Activated CD8-positive, alpha-beta T cell treated with anti-CD3 and anti-CD28 coated beads, Interleukin-2, amount 10 ng/mL, durations not matched to agents 7 days and 5 days (primary cell): ENCODE measurements at regions of chr1 and their contacts with region 1.

Region 1: GRCh38 chr1:26900001-26900814 is at the start of gene GPATCH3:
- DNase-seq: peak; percentile 94
- ATAC-seq: peak; percentile 94
- H3K4me3 Mint-ChIP-seq: peak within 1 kb of the TSS; percentile 78
- H3K27ac Mint-ChIP-seq: peak within 1 kb of the TSS; percentile 95
- H3K4me1 Mint-ChIP-seq: peaks cover 27% of the 10 kb centered on the region
- H3K27me3 Mint-ChIP-seq: no peaks in the 10 kb centered on the region
- total RNA-seq, gene GPATCH3: 14.9 to 16.4 TPM

Region 2: DNA sequence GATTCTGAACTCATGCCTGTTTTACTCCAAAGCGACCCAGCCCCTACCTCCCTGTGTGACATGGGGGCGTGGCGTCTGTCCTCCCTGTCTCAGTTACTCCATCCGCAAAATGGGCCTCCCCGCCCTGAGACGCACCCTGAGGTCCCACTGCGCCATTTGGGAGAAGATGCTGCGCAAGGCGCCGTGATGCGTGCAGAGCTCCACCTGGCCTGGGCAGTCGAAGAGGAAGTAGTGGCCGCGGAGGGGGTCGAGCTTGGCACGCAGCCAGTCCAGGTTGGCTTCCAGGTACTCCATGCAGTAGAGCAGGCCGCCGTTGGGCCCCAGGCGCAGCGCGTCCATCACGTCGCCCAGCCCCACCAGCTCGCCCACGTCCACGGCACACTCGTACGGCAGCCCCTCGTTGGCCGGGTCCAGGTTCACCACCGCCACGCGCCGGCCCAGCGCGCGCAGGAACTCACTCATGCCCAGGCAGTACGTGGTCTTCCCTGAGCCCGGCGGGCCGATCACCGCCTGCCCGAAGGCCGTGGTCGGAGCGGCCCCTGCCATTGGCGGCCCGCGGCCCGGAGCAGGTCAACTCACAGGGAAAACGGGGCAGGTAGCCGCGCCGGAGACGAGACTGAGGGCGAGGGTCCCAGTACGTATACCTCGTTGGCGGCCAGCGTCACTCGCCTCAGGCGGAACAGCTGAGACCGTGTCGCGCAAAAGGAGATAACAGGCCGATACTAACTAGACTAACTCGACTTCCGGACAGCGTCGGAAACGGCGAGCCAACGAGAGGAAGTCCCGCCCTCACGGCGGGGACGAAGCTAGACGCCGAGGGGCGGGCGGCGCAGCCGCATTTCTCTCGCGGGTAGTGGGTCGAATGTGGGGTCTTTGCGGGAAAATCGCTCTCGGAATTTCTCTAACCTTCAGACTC is 10.4 kb before region 1 on chr1 and contains the start of gene GPN2:
- CTCF ChIA-PET with region 1: interaction called, 10 read pairs
- POLR2A ChIA-PET with region 1: interaction called, 70 read pairs
- DNase-seq: peak; percentile 86
- ATAC-seq: peak; percentile 97
- H3K4me3 Mint-ChIP-seq: peak within 1 kb of the TSS; percentile 96
- H3K27ac Mint-ChIP-seq: peak within 1 kb of the TSS; percentile 96
- H3K4me1 Mint-ChIP-seq: peaks cover 32% of the 10 kb centered on the region
- H3K27me3 Mint-ChIP-seq: no peaks in the 10 kb centered on the region
- total RNA-seq, gene GPN2: 28.9 to 32.8 TPM

Region 3: GRCh38 chr1:26921540-26922430 is 21.6 kb after region 1 on chr1 and contains the start of gene NUDC:
- CTCF ChIA-PET with region 1: interaction called, 5 read pairs
- POLR2A ChIA-PET with region 1: interaction called, 17 read pairs
- DNase-seq: peak; percentile 98
- ATAC-seq: peak; percentile 95
- H3K4me3 Mint-ChIP-seq: peak within 1 kb of the TSS; percentile 98
- H3K27ac Mint-ChIP-seq: peak within 1 kb of the TSS; percentile 99
- H3K4me1 Mint-ChIP-seq: peaks cover 36% of the 10 kb centered on the region
- H3K27me3 Mint-ChIP-seq: no peaks in the 10 kb centered on the region
- total RNA-seq, gene NUDC: 85.1 to 91.2 TPM